Posterior cingulate gyrus (tissue), 11 donors: ENCODE measurements at regions of chr1 and their contacts with region 1.

Region 1: DNA sequence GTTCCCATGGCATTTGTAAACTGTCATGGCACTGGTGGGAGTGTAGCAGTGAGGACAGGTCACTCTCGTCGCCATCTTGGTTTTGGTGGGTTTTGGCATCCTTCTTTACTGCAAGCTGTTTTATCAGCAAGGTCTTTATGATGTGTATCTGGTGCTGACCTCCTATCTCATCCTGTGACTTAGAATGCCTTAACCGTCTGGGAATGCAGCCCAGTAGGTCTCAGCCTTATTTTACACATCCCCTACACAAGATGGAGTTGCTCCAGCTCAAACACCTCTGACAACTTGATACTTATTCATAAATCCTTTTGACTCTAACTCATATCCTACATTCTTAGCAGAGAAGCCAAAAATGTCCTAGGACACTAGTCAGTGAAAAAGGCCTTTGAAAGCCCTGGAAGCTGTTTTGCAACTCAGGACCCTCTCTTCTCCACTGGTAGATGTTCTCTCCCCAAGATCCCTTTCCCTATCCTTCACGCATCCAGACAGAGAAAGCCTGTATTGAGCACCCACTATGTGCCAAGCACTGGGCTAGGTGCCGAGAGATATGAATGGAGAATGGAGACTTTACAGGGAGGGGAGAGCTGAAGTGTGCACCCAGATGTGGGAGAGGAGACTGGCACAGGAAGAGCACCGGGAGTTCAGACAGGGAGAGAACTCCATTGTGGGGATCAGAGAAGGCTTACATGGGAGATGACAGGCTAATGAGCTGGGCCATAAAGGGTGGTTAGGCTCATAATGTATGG is 6.7 kb upstream of the CSRP1 start:
- DNase-seq: no peak

Region 2: DNA sequence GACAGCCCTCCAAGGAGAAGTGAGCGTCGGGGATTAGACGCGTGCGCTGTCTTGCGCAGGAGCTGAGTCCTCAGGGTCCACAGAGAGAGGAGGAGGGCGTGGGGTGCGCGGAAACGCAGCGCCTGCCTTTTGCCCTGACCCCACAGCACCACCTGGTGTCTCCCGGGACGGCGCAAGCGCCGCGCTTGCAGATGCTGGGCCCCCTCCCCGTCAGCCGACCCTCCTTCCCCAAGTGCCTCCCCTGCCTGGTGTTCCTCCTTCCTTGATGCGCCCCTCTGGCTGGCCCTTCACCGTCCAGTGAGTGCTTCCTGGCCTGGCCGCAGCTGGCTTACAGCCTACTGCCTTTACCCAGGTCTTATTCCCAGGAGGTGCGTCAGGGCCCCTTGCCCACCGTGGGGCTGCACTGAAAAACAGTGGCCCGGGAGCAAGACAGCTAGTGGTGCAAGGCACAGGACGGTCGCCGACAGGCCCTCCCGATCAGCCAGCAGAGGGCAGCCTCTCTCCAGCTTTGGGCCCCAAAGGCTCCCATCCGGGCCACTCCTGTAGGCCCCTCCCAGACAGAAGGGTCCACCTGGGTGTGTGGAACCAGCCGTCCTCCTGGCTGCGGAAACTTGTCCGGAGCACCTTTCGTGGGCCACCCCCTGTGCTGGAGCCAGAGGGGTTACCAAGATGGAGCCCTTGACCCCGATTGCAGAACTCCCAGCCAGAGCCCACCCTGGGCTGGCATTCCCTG is 31.7 kb before region 1 on chr1:
- intact Hi-C with region 1: loop called (anchors 1 kb)
- DNase-seq: peak; percentile 80 to 98 (median 91)

Region 3: GRCh38 chr1:201602413-201603265 is 89.0 kb after region 1 on chr1:
- intact Hi-C with region 1: no loop called
- DNase-seq: peak in 7 of 10 donors; percentile 34 to 93 (median 74)

Region 4: GRCh38 chr1:201916649-201917249 is 403.1 kb after region 1 on chr1:
- intact Hi-C with region 1: no loop called
- DNase-seq: peak in 1 of 10 donors; percentile 62